ENCODE measurements at regions of chr16 and their contacts with region 1.

Region 1: GRCh38 chr16:56203052-56203451 is 11.8 kb downstream of the GNAO1 start:
- DNase-seq: peak in 13 of 14 experiments; percentile 17 to 81 (median 37)
- ATAC-seq: peak; percentile 78
- H3K4me3 ChIP-seq: no peak overlapping the region
- H3K4me3 Mint-ChIP-seq: no peak overlapping the region
- H3K27ac ChIP-seq: no peak overlapping the region
- H3K27ac Mint-ChIP-seq: no peak overlapping the region
- H3K4me1 ChIP-seq: peaks cover 45% of the 10 kb centered on the region
- H3K4me1 Mint-ChIP-seq: no peaks in the 10 kb centered on the region
- H3K27me3 ChIP-seq: no peaks in the 10 kb centered on the region
- H3K27me3 Mint-ChIP-seq: no peaks in the 10 kb centered on the region
- CTCF ChIP-seq: peak; percentile 47

Region 2: DNA sequence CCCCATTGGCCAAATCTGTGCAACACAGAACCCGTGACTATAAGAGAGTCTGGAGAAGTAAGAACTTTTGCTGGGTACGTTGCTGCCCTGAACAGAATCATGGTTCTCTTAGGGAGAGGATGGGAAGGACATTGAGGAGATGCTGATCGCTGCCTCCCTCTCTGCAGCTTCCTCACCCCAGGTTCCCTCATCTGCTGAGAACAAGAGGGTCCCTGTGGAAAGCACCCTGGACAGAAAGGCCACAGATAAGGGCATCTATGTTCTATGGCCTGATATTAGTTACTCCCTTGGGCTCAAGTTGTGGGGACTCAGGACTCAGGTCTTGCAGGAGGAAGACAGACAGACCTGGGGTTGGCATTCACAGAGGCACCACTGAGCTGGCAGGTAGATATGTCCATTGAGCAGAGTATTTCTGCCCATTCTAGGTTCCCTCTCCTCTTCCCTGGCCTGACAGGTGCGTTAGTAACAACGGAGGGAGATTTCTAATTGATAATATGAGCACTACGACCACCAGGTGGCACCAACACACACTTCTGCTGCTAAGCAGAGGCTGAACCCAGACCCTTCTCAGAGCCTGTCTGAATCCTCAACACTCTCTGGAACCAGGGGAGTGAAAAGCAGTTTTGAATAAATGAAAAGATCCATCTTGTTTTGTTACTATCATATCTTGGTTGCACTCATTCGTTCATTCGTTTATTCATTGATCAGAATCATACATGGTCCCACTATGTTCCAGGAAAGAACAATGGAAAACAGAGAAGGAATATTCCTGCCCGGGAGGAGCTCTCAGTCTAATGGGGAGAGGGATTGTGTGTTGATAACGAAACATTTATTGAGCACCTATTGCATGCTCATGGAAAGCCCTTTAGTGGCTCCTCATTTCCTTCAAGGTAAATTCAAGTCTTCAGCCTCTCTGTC is 490.8 kb before region 1 on chr16:
- CTCF ChIA-PET with region 1: no interaction called
- POLR2A ChIA-PET with region 1: no interaction called
- intact Hi-C with region 1: loop called in 1 of 2 experiments (anchors 10 kb)
- DNase-seq: peak; percentile 22 to 72 (median 35)
- ATAC-seq: peak; percentile 34
- H3K4me3 ChIP-seq: no peak overlapping the region
- H3K4me3 Mint-ChIP-seq: no peak overlapping the region
- H3K27ac ChIP-seq: no peak overlapping the region
- H3K27ac Mint-ChIP-seq: no peak overlapping the region
- H3K4me1 ChIP-seq: no peaks in the 10 kb centered on the region
- H3K4me1 Mint-ChIP-seq: no peaks in the 10 kb centered on the region
- H3K27me3 ChIP-seq: peaks cover 4 to 10% of the 10 kb centered on the region in 2 experiments
- H3K27me3 Mint-ChIP-seq: peaks cover 61% of the 10 kb centered on the region
- CTCF ChIP-seq: peak; percentile 75

Region 3: DNA sequence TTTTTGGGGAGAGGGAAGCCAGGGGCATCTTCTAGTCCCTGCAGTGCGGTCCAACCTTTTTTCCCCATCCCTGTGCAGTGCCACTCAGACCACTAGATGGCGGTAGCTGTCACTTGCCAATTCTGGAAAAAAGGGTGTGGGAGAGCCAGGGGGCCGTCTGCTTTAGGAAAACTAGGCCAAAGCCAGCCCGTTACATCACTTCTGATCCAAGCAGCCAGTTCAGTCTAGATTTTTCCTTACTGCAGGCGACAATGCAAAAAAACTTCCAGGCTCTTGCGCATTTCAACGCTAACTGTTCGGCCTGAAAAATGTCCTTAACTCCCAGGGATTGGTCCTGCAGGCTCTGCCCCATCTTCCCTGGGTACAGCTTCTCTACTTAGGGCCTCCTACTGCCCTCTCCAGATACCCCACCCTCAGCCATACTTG is 258.7 kb before region 1 on chr16:
- CTCF ChIA-PET with region 1: interaction called, 3 read pairs
- POLR2A ChIA-PET with region 1: no interaction called
- intact Hi-C with region 1: loop called in 1 of 2 experiments (anchors 2 kb)
- DNase-seq: peak; percentile 21 to 70 (median 34)
- ATAC-seq: peak; percentile 37
- H3K4me3 ChIP-seq: no peak overlapping the region
- H3K4me3 Mint-ChIP-seq: no peak overlapping the region
- H3K27ac ChIP-seq: no peak overlapping the region
- H3K27ac Mint-ChIP-seq: no peak overlapping the region
- H3K4me1 ChIP-seq: no peaks in the 10 kb centered on the region
- H3K4me1 Mint-ChIP-seq: no peaks in the 10 kb centered on the region
- H3K27me3 ChIP-seq: peaks cover 14 to 21% of the 10 kb centered on the region in 2 experiments
- H3K27me3 Mint-ChIP-seq: peaks cover 71% of the 10 kb centered on the region
- CTCF ChIP-seq: peak; percentile 81

Region 4: GRCh38 chr16:56041686-56042085 is 161.4 kb before region 1 on chr16:
- CTCF ChIA-PET with region 1: no interaction called
- POLR2A ChIA-PET with region 1: no interaction called
- intact Hi-C with region 1: loop called in 1 of 2 experiments (anchors 5 kb)
- DNase-seq: peak in 8 of 14 experiments; percentile 1 to 64 (median 19)
- ATAC-seq: no peak
- H3K4me3 ChIP-seq: no peak overlapping the region
- H3K4me3 Mint-ChIP-seq: no peak overlapping the region
- H3K27ac ChIP-seq: no peak overlapping the region
- H3K27ac Mint-ChIP-seq: no peak overlapping the region
- H3K4me1 ChIP-seq: no peaks in the 10 kb centered on the region
- H3K4me1 Mint-ChIP-seq: no peaks in the 10 kb centered on the region
- H3K27me3 ChIP-seq: no peaks in the 10 kb centered on the region
- H3K27me3 Mint-ChIP-seq: peaks cover 36% of the 10 kb centered on the region
- CTCF ChIP-seq: peak; percentile 12